OCI-LY7 (cell line): ENCODE measurements at regions of chr4 and their contacts with region 1.

Region 1: DNA sequence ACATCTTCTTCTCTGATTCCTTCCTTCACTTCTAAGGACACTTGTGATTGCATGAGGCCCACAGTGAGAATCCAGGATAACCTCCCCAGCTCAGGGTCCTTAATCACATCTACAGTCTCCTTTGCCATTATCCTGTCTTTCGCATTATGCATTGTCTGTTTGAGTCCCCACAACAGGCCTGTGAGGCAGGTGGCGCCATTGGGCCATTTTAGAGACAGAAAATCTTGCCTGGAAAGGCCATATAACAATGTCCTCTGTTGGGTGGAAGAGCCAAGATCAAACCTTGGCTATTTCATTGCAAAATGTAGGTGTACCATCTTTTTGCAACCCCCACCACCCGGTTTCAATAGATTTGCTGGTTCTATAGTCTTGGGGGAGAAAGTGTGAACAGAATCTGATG is 11.8 kb upstream of the DCUN1D4 start:
- DNase-seq: peak; percentile 62
- H3K4me3 ChIP-seq: no peak overlapping the region
- H3K27ac ChIP-seq: no peak overlapping the region
- H3K4me1 ChIP-seq: no peaks in the 10 kb centered on the region
- CTCF ChIP-seq: peak; percentile 86

Region 2: DNA sequence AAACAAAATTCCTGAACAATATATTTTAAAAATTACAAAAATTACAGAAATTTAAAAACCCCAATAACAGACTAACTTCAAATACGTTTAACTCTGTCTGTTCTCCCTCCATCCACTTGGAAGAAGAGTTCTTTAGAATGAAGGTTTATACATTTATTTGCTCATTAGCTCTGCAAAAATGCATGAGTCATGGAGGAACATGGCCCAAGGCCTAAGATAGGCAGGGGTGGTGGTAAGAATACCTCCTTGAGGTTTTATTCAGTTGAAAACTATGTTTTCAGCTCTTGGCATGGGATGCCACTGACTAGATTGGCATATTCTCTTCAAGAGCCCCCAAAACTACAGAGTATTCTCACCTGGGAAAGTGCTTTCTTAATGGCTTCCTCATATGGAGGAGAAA is 197.8 kb after region 1 on chr4:
- CTCF ChIA-PET with region 1: no interaction called
- POLR2A ChIA-PET with region 1: no interaction called
- intact Hi-C with region 1: loop called (anchors 2 kb)
- DNase-seq: no peak
- H3K4me3 ChIP-seq: no peak overlapping the region
- H3K27ac ChIP-seq: no peak overlapping the region
- H3K4me1 ChIP-seq: no peaks in the 10 kb centered on the region
- CTCF ChIP-seq: no peak